Activated CD4-positive, alpha-beta memory T cell treated with anti-CD3 and anti-CD28 coated beads for 36 hours (primary cell): ENCODE measurements at regions of chr2 and their contacts with region 1.

Region 1: GRCh38 chr2:64978514-64979268 is 10.5 kb upstream of the SLC1A4 start:
- DNase-seq: no peak
- H3K4me3 Mint-ChIP-seq: no peak overlapping the region
- H3K27ac Mint-ChIP-seq: no peak overlapping the region
- H3K4me1 Mint-ChIP-seq: peaks cover 21% of the 10 kb centered on the region
- H3K27me3 Mint-ChIP-seq: no peaks in the 10 kb centered on the region

Region 2: DNA sequence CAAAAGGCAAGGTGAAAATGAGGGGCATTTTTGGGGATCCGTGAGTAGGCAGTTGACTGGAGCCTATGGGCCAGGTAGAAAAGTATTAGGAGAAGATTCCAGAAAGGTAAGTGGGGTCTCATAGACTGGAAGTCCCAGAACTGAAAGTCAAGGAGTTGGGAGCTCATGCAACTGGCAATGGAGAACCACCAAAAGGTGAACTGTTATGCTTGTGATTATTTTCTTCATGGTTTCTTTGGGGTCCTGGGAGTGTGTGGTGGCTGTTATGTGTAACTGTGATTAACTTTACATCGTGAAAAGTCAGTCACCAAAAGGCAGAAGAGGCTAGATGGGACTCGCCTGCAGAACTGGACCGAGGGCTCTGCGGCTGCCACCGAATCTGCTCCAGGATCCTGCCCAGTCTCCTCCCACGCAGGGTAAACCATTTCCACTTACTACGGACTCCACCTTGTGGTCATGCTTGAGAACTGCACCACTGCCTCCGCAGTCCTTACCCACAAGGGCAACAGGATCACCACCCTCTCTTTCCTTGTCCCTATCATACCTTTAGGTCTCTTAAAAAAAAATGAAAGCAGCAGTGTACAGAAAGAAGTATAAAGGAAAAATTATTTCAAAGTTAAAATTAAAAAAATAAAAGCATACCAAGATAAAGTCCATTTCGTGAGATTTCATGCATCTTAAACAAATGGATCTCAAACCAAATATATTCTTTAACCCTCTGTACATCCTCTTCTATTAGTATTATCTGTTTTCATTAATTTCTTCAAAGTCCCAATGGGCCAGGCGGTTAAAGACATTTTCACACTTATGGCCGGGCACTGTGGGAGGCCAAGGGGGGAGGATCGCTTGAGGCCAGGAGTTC is 61.9 kb after region 1 on chr2:
- CTCF ChIA-PET with region 1: interaction called, 6 read pairs
- POLR2A ChIA-PET with region 1: no interaction called
- intact Hi-C with region 1: loop called (anchors 1 kb)
- DNase-seq: peak; percentile 85
- H3K4me3 Mint-ChIP-seq: peak overlapping the region; percentile 28
- H3K27ac Mint-ChIP-seq: no peak overlapping the region
- H3K4me1 Mint-ChIP-seq: peaks cover 6% of the 10 kb centered on the region
- H3K27me3 Mint-ChIP-seq: no peaks in the 10 kb centered on the region